HepG2 (cell line): ENCODE measurements at regions of chr22 and their contacts with region 1.

Region 1: GRCh38 chr22:33076343-33076742 is 18.2 kb upstream of the SYN3 start:
- DNase-seq: no peak
- ATAC-seq: no peak
- H3K4me3 ChIP-seq: no peak overlapping the region
- H3K27ac ChIP-seq: no peak overlapping the region
- H3K4me1 ChIP-seq: no peaks in the 10 kb centered on the region
- H3K27me3 ChIP-seq: peaks cover 0 to 21% of the 10 kb centered on the region in 2 experiments; a peak in 4 of 5 replicates
- CTCF ChIP-seq: no peak
- EP300 ChIP-seq: no peak
- POLR2A ChIP-seq: no peak
- RAD21 ChIP-seq: no peak

Region 2: DNA sequence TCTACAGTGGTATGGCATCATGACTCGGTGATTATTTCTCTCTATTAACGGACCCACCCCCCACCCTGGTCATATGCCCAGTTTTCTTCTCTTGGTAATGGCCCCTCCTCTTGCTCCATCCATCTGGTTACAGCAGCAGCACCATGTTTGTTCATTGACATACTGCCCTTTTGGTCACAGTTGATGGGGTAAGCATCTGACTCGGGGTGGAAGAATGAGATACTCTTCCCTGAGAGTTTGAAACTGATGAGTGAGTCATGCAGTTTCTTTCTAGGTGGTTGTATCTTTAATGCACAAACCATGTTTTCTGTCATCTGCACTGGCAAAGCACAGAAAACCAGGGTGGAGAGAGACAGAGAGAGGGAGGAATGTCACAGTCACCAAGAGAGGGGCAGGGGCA is 144.2 kb before region 1 on chr22:
- CTCF ChIA-PET with region 1: no interaction called
- POLR2A ChIA-PET with region 1: no interaction called
- in situ Hi-C with region 1: no loop called
- intact Hi-C with region 1: no loop called
- DNase-seq: peak; percentile 31
- ATAC-seq: no peak
- H3K4me3 ChIP-seq: no peak overlapping the region
- H3K27ac ChIP-seq: no peak overlapping the region
- H3K4me1 ChIP-seq: peaks cover 6% of the 10 kb centered on the region; the same call in 1 of the 2 replicates
- H3K27me3 ChIP-seq: no peaks in the 10 kb centered on the region
- CTCF ChIP-seq: no peak
- EP300 ChIP-seq: no peak
- POLR2A ChIP-seq: no peak
- RAD21 ChIP-seq: no peak

Region 3: DNA sequence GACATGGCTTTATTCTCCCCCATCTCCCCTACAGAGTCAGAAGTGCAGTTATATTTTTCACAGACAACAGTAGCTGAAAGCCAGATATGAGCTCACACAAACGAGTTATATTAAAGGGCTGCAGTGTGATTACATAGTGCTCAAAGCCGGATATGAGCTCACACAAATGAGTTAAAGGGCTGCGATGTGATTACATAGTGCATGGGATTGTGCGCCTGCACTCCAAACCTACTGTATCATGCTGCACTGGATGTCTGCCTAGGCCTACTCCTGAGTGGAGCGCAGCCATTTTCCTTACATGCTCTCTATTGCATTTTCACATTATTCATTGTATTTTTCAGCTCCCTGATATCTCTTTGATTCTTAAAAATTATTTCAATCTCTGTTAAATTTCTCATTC is 1258.5 kb after region 1 on chr22:
- CTCF ChIA-PET with region 1: no interaction called
- POLR2A ChIA-PET with region 1: no interaction called
- in situ Hi-C with region 1: no loop called
- intact Hi-C with region 1: loop called (anchors 5 kb)
- DNase-seq: no peak
- ATAC-seq: no peak
- H3K4me3 ChIP-seq: no peak overlapping the region
- H3K27ac ChIP-seq: no peak overlapping the region
- H3K4me1 ChIP-seq: no peaks in the 10 kb centered on the region
- H3K27me3 ChIP-seq: no peaks in the 10 kb centered on the region; a peak in 1 of 5 replicates
- CTCF ChIP-seq: no peak
- EP300 ChIP-seq: no peak
- POLR2A ChIP-seq: no peak
- RAD21 ChIP-seq: no peak